ENCODE measurements at regions of chr1 and their contacts with region 1.

Region 1: DNA sequence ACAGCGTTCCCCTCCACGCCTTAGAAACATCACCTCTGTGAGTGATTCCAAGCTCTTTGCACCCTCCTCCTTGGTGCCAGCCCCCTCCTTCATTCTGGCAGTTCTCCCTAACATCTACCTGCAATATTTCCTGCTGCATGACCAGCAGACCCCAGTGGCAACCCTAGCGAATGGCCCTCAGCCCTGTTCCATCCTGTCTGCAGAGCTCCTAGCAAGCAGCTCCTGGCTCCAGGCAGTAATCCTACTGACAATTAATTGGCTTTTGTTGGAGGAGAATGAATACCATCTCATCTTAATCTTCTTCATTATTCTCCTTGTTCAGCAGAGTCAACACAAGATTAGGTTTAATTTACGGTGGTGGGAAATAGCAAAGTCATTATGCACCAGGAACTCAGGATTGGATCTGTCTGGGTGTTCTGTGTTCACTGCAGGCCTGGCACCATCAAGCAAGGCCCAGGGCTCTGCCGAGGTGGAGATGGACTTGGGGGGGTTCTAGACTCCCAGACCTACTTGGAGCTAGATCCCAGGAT is 12.4 kb downstream of the FBXO2 start:
- DNase-seq: no peak
- H3K4me3 ChIP-seq: no peak overlapping the region
- H3K27ac ChIP-seq: no peak overlapping the region
- H3K4me1 ChIP-seq: no peaks in the 10 kb centered on the region
- H3K27me3 ChIP-seq: peaks cover 0 to 23% (median 7%) of the 10 kb centered on the region in 3 donors
- CTCF ChIP-seq: no peak
- EP300 ChIP-seq: no peak
- POLR2A ChIP-seq: no peak

Region 2: GRCh38 chr1:11037740-11038182 is 604.1 kb before region 1 on chr1:
- intact Hi-C with region 1: loop called (anchors 2 kb)
- DNase-seq: peak; percentile 94
- H3K4me3 ChIP-seq: no peak overlapping the region
- H3K27ac ChIP-seq: no peak overlapping the region
- H3K4me1 ChIP-seq: peaks cover 0 to 10% (median 7%) of the 10 kb centered on the region in 4 donors
- H3K27me3 ChIP-seq: no peaks in the 10 kb centered on the region
- CTCF ChIP-seq: peak; percentile 92 to 97 (median 94)
- EP300 ChIP-seq: no peak
- POLR2A ChIP-seq: no peak

Region 3: DNA sequence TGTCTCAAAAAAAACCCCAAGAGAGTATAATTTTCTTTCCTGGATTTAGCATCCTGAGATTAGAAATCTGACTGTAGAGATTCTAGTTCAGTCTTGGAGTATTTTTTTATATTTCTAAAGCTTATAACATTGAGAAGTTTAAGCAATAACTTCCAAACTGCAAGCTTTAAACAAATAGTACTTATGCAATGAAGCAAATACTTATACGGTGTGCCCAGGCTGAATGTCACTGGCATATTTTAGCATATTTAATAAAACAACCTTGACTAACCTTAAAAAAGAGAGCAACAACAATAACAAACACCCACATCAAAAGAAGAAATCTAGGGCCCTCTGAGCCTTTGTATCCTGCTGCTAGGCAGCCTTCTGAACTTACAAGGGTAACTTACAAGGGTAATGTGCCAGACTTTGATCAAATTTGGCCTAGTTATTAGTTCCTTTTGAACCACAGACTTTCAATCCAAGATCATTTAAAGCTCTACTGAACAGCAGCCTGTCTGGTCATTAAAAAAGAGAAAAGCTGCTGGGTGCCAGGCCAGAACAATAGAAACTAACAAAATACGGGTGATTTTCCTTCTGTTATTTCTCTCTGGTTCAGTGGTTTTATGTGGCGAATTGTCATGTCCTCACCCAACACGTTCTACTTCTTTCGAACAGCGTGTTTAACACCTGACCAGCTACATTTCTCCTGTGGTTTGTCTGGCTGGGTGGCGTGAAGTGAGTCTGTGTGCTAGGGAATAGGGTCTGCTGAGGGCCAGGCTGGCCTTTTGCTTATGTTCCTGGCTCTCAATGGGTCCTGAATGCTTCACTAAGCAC is 395.7 kb before region 1 on chr1:
- intact Hi-C with region 1: loop called (anchors 1 kb)
- DNase-seq: no peak
- H3K4me3 ChIP-seq: no peak overlapping the region
- H3K27ac ChIP-seq: no peak overlapping the region
- H3K4me1 ChIP-seq: no peaks in the 10 kb centered on the region
- H3K27me3 ChIP-seq: no peaks in the 10 kb centered on the region
- CTCF ChIP-seq: no peak
- EP300 ChIP-seq: no peak
- POLR2A ChIP-seq: no peak

Region 4: GRCh38 chr1:11337580-11338073 is 304.2 kb before region 1 on chr1:
- intact Hi-C with region 1: loop called (anchors 5 kb)
- DNase-seq: no peak
- H3K4me3 ChIP-seq: no peak overlapping the region
- H3K27ac ChIP-seq: no peak overlapping the region
- H3K4me1 ChIP-seq: peaks cover 0 to 9% (median 6%) of the 10 kb centered on the region in 4 donors
- H3K27me3 ChIP-seq: peaks cover 2 to 67% (median 18%) of the 10 kb centered on the region in 3 donors
- CTCF ChIP-seq: peak in 2 of 4 experiments; percentile 38 to 42
- EP300 ChIP-seq: no peak
- POLR2A ChIP-seq: no peak

Measured in sigmoid colon (tissue), 7 donors.